Ascending aorta (tissue), 2 donors: ENCODE measurements at regions of chr1 and their contacts with region 1.

Region 1: DNA sequence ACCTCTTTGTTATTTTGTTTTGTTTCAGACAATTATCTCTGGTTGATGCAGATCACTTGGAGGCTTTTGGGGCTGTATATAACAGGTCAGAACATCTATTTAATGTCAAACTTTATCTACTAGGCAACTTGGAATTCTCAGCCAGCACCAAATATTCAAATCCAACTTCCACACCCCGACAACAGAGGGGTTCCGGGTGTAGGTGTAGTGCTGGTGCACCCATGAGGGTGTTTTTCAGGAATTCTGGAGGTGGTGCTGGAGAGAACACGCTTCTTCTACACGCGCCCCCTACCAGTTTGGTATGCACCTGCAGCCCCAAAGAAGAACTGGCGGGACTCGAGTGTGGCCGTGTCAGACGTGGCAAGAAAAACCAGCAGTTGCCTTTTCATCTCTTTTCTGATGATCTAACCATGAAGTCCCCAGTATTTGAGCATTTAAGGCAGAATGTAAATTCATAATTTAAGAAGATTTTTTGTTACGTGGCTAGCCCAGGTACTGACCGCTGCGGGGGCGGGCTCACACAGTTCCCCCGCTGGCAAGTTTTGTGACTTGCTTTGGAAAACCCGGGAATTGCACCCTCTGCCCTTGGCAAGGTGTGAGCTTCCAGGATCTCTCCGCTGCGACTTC is 462 bp upstream of the TLCD4 start:
- DNase-seq: peak in 1 of 2 donors; percentile 79
- H3K4me3 ChIP-seq: peak overlapping the region; percentile 85 to 88
- H3K27ac ChIP-seq: peak overlapping the region; percentile 77 to 85
- H3K4me1 ChIP-seq: peaks cover 0 to 4% of the 10 kb centered on the region in 2 donors
- H3K27me3 ChIP-seq: no peaks in the 10 kb centered on the region
- CTCF ChIP-seq: peak; percentile 60 to 71 (median 61)

Region 2: GRCh38 chr1:95072532-95073419 is 43.9 kb before region 1 on chr1 and contains the start of gene ALG14:
- intact Hi-C with region 1: loop called (anchors 1 kb)
- DNase-seq: peak; percentile 72 to 96
- H3K4me3 ChIP-seq: peak within 1 kb of the TSS; percentile 67 to 71
- H3K27ac ChIP-seq: peak within 1 kb of the TSS; percentile 88 to 89
- H3K4me1 ChIP-seq: peaks cover 0 to 3% of the 10 kb centered on the region in 2 donors
- H3K27me3 ChIP-seq: no peaks in the 10 kb centered on the region
- CTCF ChIP-seq: no peak
- total RNA-seq, gene ALG14: not detected

Region 3: GRCh38 chr1:95084317-95085176 is 32.1 kb before region 1 on chr1:
- intact Hi-C with region 1: loop called (anchors 1 kb)
- DNase-seq: no peak
- H3K4me3 ChIP-seq: no peak overlapping the region
- H3K27ac ChIP-seq: peak overlapping the region; percentile 3 to 32
- H3K4me1 ChIP-seq: peaks cover 3 to 17% of the 10 kb centered on the region in 2 donors
- H3K27me3 ChIP-seq: no peaks in the 10 kb centered on the region
- CTCF ChIP-seq: peak in 2 of 3 experiments; percentile 43 to 56